Left ventricle myocardium superior (tissue), 1 donor: ENCODE measurements at regions of chr5 and their contacts with region 1.

Region 1: GRCh38 chr5:152221721-152222629 is 183.1 kb downstream of the NMUR2 start:
- DNase-seq: peak; percentile 27
- ATAC-seq: peak; percentile 94

Region 2: GRCh38 chr5:152456815-152457443 is 235.0 kb after region 1 on chr5:
- intact Hi-C with region 1: loop called (anchors 5 kb)
- DNase-seq: no peak
- ATAC-seq: no peak